Posterior cingulate gyrus (tissue), 11 donors: ENCODE measurements at regions of chr12 and their contacts with region 1.

Region 1: DNA sequence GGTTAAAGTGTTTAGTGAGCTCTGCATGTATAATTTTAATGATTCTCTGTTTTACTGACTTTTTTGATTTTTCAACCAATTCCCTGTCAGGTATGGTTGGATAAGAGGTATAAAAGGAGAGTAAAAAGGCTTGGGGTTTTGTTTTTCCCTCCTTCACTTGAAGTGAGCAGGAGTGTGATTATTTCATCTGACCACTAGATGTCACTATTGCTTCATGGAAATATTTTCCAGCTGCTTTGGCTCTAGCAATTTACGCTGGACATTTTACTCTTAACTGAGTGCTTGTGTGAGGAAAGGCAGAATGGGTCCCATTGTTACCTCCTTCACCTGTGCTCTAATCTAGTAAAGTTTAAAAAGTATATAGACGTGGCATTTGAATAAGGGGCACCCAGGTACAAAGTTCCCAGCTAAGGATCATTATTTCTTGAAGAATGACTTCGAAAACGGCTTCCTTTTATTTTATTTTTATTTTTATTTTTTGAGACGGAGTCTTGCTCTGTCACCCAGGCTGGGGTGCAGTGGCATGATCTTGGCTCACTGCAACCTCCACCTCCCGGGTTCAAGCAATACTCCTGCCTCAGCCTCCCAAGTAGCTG is 66.5 kb downstream of the TBC1D30 start:
- DNase-seq: no peak

Region 2: DNA sequence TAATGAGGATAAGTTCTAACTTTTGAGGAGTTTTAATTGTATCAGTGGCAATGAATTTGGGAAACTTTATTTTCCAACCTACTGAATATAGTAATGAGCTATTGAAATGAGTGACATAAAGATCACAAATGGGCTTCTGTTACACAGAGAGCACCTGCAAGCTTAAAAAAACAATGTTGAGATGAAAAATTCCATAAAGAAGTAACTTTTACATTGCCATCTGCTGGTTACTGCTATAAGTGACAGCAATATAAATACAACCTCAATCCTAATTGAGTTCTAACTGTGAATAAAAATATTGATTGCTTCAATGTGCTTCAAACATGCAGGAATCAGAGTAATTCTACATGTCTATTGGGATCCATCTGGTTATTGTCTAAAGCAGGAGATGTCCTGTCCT is 216.0 kb after region 1 on chr12:
- intact Hi-C with region 1: loop called (anchors 5 kb)
- DNase-seq: no peak

Region 3: GRCh38 chr12:65121049-65121955 is 230.3 kb after region 1 on chr12 and contains the start of gene WIF1:
- intact Hi-C with region 1: loop called (anchors 1 kb)
- DNase-seq: peak in 9 of 10 donors; percentile 9 to 92 (median 40)

Region 4: DNA sequence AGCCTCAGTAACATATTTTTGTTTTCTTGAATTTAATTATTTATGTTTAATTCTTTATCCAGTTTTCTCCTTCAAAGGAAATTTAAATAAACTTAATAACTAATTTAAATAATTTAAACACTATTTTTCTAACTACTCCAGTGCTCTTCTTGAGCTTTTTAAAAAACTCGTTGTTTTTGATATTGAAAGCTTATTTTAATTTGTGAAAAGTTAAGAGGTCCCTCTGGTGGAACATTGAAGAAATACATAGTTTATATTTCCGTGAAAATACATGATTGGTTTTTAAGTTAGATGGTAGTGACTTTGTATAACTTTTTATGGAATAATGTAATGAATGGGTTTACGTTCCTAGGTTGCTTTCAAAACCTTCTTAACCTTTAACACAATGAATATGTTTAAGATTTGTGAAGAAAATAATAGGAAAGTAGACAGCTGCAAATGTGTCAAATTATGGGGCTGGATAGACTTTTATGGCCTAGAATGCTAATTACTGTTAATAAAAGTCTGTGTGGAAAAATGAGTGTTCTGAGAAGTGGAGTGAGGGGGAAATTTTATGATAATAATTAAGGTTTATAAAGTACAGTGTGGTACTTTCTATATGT is 341.6 kb after region 1 on chr12:
- intact Hi-C with region 1: loop called (anchors 5 kb)
- DNase-seq: no peak

Region 5: GRCh38 chr12:65372574-65372973 is 481.6 kb after region 1 on chr12:
- intact Hi-C with region 1: no loop called
- DNase-seq: no peak